ENCODE measurements at regions of chrX and their contacts with region 1.

Region 1: DNA sequence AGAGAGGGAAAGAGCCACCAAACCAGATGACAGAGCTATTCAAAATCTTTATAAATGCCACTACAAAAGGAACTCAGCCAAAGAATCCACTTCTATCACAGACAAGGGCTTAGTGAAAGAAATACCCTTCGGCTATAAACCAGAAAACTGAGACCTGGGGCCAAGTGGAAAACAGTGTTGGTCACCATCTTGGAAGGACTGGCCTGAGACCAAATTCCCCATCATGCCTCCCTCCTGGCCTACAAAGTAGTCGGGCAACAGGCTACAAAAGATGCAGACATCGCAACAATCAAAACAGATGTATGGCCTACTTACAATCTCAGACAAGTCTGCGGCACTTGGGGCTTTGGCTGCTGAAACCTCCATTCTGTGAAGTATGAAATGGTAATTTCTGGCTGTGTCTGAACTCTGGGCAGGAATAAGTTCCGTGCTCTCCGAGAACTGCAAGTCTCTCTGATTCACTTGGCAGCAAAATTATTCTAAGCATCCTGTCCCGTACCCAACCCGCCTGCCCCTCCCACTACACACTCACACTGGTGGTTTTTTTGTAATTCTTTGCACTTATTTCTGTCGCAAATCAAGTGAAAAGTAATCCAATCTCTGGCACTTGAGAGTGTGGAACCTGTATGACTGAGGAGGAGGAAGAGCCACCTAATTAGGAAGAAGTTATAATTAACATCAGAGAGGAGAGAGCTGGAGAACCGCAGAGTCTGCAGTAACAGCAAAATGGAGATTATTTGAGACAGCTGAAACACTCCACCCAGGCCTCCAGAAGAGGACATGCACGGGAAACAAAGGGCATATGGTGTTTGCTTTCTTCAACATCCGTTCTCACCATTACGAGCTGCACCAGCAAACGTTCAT is 87.8 kb downstream of the SH3KBP1 start:
- DNase-seq: peak in 1 of 2 donors; percentile 7
- ATAC-seq: peak in 5 of 8 donors; percentile 52 to 81 (median 70)
- H3K4me3 ChIP-seq: peak overlapping the region in 4 of 10 donors; percentile 8 to 33 (median 12)
- H3K27ac ChIP-seq: peak overlapping the region in 9 of 10 donors; percentile 10 to 73 (median 49)
- H3K4me1 ChIP-seq: peaks cover 0 to 26% (median 6%) of the 10 kb centered on the region in 9 donors
- H3K27me3 ChIP-seq: no peaks in the 10 kb centered on the region
- CTCF ChIP-seq: no peak

Region 2: GRCh38 chrX:19739683-19740082 is 59.9 kb before region 1 on chrX:
- intact Hi-C with region 1: loop called in 2 of 10 experiments (anchors 10 kb)
- DNase-seq: peak; percentile 48 to 49
- ATAC-seq: peak in 6 of 8 donors; percentile 52 to 86 (median 69)
- H3K4me3 ChIP-seq: no peak overlapping the region
- H3K27ac ChIP-seq: no peak overlapping the region
- H3K4me1 ChIP-seq: peaks cover 0 to 9% (median 0%) of the 10 kb centered on the region in 9 donors
- H3K27me3 ChIP-seq: peaks cover 0 to 3% (median 0%) of the 10 kb centered on the region in 7 donors
- CTCF ChIP-seq: peak; percentile 28 to 74 (median 64)

Region 3: DNA sequence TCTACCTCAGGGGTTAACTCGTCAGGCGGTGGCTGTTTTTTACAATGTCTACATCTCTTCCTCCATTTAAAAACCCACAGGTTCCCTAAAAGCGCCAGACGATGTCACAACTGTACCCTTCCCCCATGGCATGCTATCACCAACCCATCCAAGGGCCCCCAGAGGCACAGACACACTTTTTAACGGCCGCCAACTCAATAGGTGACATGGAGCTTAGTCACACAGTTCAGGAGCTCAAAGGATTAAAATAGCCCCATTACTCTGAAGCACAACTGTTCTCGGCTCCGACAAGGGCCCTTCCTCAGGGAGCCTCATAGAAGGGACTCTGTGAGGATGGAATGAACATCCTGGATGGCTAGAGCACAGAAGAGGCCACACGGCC is 75.5 kb after region 1 on chrX:
- intact Hi-C with region 1: loop called in 1 of 10 experiments (anchors 10 kb)
- DNase-seq: no peak
- ATAC-seq: no peak
- H3K4me3 ChIP-seq: no peak overlapping the region
- H3K27ac ChIP-seq: peak overlapping the region in 1 of 10 donors; percentile 49
- H3K4me1 ChIP-seq: peaks cover 0 to 21% (median 0%) of the 10 kb centered on the region in 9 donors
- H3K27me3 ChIP-seq: peaks cover 0 to 6% (median 0%) of the 10 kb centered on the region in 7 donors
- CTCF ChIP-seq: no peak